Left lung (tissue), 14 donors: ENCODE measurements at regions of chr9 and their contacts with region 1.

Region 1: DNA sequence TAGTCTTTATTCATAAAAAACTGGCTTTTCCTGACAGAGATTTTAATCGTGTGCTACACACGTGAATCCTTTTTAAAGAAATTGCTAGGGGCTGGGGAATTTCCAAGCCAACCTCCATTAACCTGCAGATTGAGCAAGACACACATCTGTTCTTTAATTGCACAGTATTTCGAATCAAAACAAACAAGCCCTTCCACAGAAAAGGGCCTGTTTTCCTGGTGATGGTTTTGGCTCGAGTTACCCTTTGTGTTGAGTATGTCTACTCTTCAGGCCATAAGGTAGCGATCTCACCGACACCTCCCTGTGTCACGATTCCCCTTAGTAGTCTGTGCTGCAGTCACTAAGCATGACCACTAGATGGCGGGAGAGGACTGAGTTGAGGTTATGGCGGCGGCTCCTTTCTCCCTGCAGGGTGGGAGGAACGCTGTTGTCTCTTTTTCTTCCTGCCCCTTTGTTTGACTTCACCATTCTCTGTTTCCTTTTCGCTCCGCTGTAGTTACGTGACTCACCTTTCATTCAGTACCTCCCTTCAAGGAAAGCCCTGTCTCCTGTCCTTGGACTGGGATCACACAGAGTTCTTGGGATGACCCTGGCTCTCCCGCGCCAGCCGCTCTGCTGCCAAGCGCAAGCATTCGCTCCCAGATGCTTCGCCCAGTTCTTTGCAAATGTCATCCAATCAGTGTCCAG is 137.1 kb upstream of the SLC24A2 start:
- DNase-seq: peak; percentile 71 to 88 (median 78)
- ATAC-seq: peak; percentile 100
- H3K4me3 ChIP-seq: peak overlapping the region; percentile 8 to 10
- H3K27ac ChIP-seq: no peak overlapping the region
- H3K4me1 ChIP-seq: peaks cover 0 to 6% of the 10 kb centered on the region in 2 donors
- H3K27me3 ChIP-seq: no peaks in the 10 kb centered on the region
- CTCF ChIP-seq: peak; percentile 91 to 93

Region 2: DNA sequence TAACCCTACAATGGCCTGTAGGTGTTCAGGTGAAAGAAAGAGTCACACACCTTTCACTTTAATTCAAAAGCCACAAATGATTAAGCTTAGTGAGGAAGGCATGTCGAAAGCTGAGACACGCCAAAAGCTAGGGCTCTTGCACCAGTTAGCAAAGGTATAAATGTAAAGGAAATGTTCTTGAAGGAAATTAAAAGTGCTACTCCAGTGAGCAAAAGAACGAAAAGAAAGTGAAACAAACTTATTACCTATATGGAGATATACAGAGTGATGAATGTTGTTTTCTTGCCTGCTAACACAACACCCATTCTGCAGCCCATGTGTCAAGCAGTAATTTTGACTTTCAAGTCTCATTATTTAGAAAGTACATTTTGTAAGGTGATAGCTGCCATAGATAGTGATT is 117.1 kb after region 1 on chr9:
- intact Hi-C with region 1: no loop called
- DNase-seq: no peak
- ATAC-seq: no peak
- H3K4me3 ChIP-seq: no peak overlapping the region
- H3K27ac ChIP-seq: no peak overlapping the region
- H3K4me1 ChIP-seq: no peaks in the 10 kb centered on the region
- H3K27me3 ChIP-seq: no peaks in the 10 kb centered on the region
- CTCF ChIP-seq: no peak

Region 3: DNA sequence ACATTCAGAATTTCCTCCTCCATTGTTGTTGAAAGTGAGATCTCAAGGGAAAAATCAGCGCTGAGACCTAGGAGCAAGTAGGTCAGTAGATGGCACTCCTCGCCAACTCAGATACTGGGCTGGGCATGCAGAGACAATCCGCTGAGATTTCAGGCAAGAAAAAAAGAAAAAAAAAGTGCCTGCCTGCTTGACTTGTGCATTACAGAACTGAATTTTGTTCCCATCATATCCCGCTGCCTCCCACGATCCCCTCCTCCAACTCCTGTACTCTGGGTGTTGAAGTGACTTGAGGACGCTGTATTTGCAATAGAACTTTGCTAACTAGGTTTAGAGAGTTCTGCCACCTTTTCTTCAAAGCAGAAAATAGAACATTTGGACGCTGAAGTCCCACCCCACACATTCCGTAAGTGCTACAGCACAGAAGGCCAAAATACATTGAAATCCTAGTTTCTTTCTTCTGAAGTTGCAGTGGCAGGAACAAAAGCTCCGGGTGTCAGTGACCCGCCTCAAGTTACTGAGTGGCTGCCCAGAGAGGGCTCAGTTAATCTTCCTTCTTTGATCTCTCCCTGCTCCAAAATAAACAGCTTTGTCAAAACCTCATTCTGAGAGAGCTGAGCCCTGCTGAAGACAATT is 430.6 kb after region 1 on chr9:
- intact Hi-C with region 1: loop called in 1 of 2 experiments (anchors 10 kb)
- DNase-seq: peak in 3 of 4 donors; percentile 55 to 83 (median 74)
- ATAC-seq: peak; percentile 90
- H3K4me3 ChIP-seq: no peak overlapping the region
- H3K27ac ChIP-seq: no peak overlapping the region
- H3K4me1 ChIP-seq: peaks cover 0 to 3% of the 10 kb centered on the region in 2 donors
- H3K27me3 ChIP-seq: no peaks in the 10 kb centered on the region
- CTCF ChIP-seq: peak; percentile 38 to 44

Region 4: DNA sequence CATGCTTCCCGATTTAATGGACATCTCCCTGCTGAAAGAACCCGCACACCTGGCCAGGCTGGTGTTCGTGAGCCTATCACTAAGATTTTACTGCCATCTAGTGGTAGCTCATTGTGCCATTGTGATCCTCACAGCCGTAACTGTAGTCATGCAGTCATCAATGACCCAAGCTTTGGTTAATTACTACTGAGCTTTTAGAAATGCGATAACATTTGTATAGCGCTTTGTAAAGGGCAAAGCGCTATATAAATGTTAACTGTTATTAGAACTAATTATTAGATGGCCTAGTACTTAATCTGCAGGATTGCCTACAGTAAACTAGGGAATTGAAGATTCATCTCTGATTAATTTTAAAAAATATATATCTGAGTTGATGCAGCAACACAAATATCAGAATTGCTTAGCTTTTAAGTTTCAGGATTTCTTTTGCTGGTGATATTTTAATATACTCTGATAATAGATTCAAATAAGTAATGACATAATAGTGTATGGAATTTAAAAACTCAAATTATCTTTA is 1015.3 kb after region 1 on chr9:
- intact Hi-C with region 1: loop called in 1 of 2 experiments (anchors 10 kb)
- DNase-seq: peak in 3 of 4 donors; percentile 35 to 71 (median 42)
- ATAC-seq: peak; percentile 98
- H3K4me3 ChIP-seq: no peak overlapping the region
- H3K27ac ChIP-seq: no peak overlapping the region
- H3K4me1 ChIP-seq: peaks cover 0 to 6% of the 10 kb centered on the region in 2 donors
- H3K27me3 ChIP-seq: no peaks in the 10 kb centered on the region
- CTCF ChIP-seq: peak; percentile 77 to 82

Region 5: GRCh38 chr9:21110708-21111576 is 1185.0 kb after region 1 on chr9:
- intact Hi-C with region 1: loop called in 1 of 2 experiments (anchors 10 kb)
- DNase-seq: peak in 2 of 4 donors; percentile 63 to 79
- ATAC-seq: peak; percentile 95
- H3K4me3 ChIP-seq: no peak overlapping the region
- H3K27ac ChIP-seq: no peak overlapping the region
- H3K4me1 ChIP-seq: no peaks in the 10 kb centered on the region
- H3K27me3 ChIP-seq: no peaks in the 10 kb centered on the region
- CTCF ChIP-seq: peak; percentile 73 to 75

Region 6: DNA sequence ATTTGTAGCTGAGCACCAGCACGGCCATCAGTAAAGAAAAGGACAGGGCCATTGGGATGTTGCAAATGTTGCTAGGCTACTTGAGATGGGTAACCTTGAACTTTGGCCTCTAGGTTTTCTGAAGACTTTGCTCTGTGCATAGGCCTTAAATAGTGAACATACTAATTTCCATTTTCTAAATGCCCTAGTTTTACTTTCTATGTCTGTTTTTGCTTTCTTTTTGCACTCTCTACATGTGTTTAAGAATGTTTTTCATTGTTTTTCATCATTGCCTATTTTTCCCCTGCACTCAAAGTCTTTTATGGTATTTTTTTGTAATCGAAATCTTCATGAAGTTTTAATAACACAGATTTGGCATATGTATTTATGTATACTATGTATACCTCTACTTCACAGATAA is 1302.2 kb after region 1 on chr9 and contains the start of gene IFNA17:
- intact Hi-C with region 1: no loop called
- DNase-seq: no peak
- ATAC-seq: no peak
- H3K4me3 ChIP-seq: no peak within 1 kb of the TSS
- H3K27ac ChIP-seq: no peak within 1 kb of the TSS
- H3K4me1 ChIP-seq: no peaks in the 10 kb centered on the region
- H3K27me3 ChIP-seq: no peaks in the 10 kb centered on the region
- CTCF ChIP-seq: no peak
- polyA plus RNA-seq, gene IFNA17: not detected